K562 (cell line): ENCODE measurements at regions of chr1 and their contacts with region 1.

Region 1: DNA sequence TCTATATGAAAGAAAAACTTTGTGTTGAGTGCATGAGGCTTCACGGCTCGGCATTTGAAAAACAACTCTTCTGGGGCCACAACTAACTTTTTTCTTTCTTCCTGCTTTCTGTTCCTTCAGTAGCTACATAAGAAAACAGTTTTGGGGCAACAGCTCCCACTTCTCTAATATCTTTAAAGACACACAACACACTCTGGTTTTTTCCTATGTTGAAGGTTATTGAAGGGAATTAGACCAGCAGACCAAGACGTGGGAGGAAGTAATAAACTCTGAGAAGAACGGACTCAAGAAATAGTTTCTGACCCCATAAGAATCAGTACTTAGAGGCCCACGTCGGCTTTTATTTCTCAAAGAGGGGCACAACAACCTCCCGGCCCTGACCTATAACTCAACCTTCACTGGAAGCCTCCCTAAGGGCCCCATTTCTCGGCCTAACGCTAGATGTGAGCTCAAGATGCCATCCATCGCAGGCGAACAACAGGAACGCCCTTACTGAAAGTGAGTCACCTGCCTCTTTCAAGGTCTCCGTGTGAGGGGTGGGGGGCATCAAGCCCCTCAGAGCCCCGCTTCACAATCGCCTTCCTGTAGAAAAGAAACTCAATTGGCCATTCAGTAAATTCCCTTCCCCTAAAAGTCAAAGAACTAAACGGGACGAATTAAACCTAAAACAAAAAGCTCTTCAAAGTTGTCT is 844 bp downstream of the ZMYM6 start:
- DNase-seq: peak; percentile 60 to 71 (median 64)
- ATAC-seq: peak; percentile 73
- H3K4me3 ChIP-seq: peak overlapping the region; percentile 61
- H3K27ac ChIP-seq: peak overlapping the region; percentile 88
- H3K4me1 ChIP-seq: peaks cover 0 to 7% of the 10 kb centered on the region in 2 experiments; a peak in 3 of 5 replicates
- H3K27me3 ChIP-seq: no peaks in the 10 kb centered on the region
- CTCF ChIP-seq: no peak
- EP300 ChIP-seq: no peak
- POLR2A ChIP-seq: no peak
- RAD21 ChIP-seq: no peak

Region 2: GRCh38 chr1:35016406-35016805 is 14.5 kb before region 1 on chr1:
- CTCF ChIA-PET with region 1: no interaction called
- POLR2A ChIA-PET with region 1: interaction called, 12 read pairs
- in situ Hi-C with region 1: no loop called
- intact Hi-C with region 1: no loop called
- DNase-seq: no peak
- ATAC-seq: no peak
- H3K4me3 ChIP-seq: no peak overlapping the region
- H3K27ac ChIP-seq: no peak overlapping the region
- H3K4me1 ChIP-seq: no peaks in the 10 kb centered on the region
- H3K27me3 ChIP-seq: no peaks in the 10 kb centered on the region
- CTCF ChIP-seq: no peak
- EP300 ChIP-seq: no peak
- POLR2A ChIP-seq: no peak
- RAD21 ChIP-seq: no peak

Region 3: DNA sequence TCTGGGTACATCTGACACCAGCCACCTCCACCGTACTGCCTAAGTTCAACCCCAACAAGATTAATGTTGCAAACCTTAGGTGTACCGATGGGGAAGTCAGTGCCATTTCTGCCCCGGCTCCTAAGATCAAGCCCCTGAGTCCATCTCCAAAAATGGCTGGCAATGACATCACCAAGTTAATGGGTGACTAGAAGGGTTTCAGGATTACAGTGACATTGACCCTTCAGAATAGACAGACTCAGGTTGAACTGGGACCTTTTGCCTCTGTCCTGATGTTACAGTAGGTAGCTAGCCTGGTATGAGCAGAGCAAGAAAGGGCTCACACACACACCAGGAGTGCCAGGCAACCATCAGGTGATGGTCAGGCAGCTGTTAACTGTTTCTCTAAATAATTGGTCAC is 22.5 kb after region 1 on chr1:
- CTCF ChIA-PET with region 1: no interaction called
- POLR2A ChIA-PET with region 1: no interaction called
- in situ Hi-C with region 1: no loop called
- intact Hi-C with region 1: no loop called
- DNase-seq: no peak
- ATAC-seq: no peak
- H3K4me3 ChIP-seq: no peak overlapping the region
- H3K27ac ChIP-seq: no peak overlapping the region
- H3K4me1 ChIP-seq: no peaks in the 10 kb centered on the region
- H3K27me3 ChIP-seq: peaks cover 8 to 13% of the 10 kb centered on the region in 2 experiments; a peak in 3 of 5 replicates
- CTCF ChIP-seq: no peak
- EP300 ChIP-seq: no peak
- POLR2A ChIP-seq: no peak
- RAD21 ChIP-seq: no peak

Region 4: DNA sequence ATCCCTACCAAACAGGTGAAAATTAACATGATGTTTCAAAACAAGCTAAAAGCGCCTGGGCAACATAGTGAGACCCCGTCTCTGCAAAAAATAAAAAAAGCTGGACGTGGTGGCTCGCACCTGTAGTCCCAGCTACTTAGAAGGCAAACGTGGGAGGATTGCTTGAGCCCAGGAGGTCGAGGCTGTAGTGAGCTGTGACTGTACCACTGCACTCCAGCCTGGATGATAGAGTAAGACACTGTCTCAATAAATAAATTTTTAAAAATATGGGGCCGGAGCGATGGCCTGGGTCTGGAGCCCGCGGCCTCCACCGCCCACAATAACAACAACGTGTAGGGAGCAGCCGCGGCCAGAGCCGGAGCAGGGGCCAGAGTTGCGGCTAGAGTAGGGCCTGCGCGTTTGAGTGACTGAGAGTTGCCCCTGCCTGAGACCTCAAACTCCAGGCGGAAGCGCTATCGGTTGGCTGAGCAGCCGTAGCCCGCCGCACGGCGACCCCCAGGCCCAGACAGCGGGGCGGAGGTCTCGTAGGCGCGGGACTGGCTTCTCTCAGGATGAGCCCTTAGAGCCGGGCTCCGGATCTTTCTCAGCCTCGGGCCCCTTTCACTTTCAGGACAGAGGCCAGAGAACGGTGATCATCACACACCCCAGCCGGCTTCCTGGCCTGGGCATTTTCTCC is 89.7 kb after region 1 on chr1:
- CTCF ChIA-PET with region 1: no interaction called
- POLR2A ChIA-PET with region 1: no interaction called
- in situ Hi-C with region 1: no loop called
- intact Hi-C with region 1: no loop called
- DNase-seq: no peak
- ATAC-seq: peak; percentile 35; the same call in 1 of the 3 replicates
- H3K4me3 ChIP-seq: no peak overlapping the region
- H3K27ac ChIP-seq: no peak overlapping the region
- H3K4me1 ChIP-seq: peaks cover 0 to 16% of the 10 kb centered on the region in 2 experiments; a peak in 2 of 5 replicates
- H3K27me3 ChIP-seq: no peaks in the 10 kb centered on the region
- CTCF ChIP-seq: no peak
- EP300 ChIP-seq: no peak
- POLR2A ChIP-seq: no peak
- RAD21 ChIP-seq: no peak

Region 5: DNA sequence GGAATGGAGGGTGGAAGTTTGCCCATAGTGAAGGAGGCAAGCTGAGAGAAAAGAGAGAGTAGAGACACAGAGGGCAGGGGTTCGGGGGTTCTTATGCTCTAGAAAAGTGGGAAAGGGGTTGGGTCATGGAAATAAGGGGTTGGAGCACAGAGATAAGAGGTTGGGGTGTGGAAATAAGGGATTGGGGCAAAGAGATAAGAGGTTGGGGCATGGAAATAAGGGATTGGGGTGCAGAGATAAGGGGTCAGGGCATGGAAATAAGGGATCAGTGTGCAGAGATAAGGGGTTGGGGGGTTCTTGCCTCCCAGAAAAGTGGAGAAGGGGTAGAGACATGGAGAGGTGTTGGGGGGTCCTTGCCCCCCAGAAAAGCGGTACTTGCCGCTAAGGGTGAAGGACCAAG is 105.9 kb after region 1 on chr1:
- CTCF ChIA-PET with region 1: no interaction called
- POLR2A ChIA-PET with region 1: no interaction called
- in situ Hi-C with region 1: no loop called
- intact Hi-C with region 1: loop called (anchors 5 kb)
- DNase-seq: peak in 2 of 4 experiments; percentile 12 to 50
- ATAC-seq: peak; percentile 36; the same call in 2 of the 3 replicates
- H3K4me3 ChIP-seq: no peak overlapping the region
- H3K27ac ChIP-seq: no peak overlapping the region; the same call in 2 of the 3 replicates
- H3K4me1 ChIP-seq: peaks cover 6 to 14% of the 10 kb centered on the region in 2 experiments
- H3K27me3 ChIP-seq: no peaks in the 10 kb centered on the region
- CTCF ChIP-seq: no peak
- EP300 ChIP-seq: peak; percentile 77
- POLR2A ChIP-seq: no peak
- RAD21 ChIP-seq: no peak

Region 6: DNA sequence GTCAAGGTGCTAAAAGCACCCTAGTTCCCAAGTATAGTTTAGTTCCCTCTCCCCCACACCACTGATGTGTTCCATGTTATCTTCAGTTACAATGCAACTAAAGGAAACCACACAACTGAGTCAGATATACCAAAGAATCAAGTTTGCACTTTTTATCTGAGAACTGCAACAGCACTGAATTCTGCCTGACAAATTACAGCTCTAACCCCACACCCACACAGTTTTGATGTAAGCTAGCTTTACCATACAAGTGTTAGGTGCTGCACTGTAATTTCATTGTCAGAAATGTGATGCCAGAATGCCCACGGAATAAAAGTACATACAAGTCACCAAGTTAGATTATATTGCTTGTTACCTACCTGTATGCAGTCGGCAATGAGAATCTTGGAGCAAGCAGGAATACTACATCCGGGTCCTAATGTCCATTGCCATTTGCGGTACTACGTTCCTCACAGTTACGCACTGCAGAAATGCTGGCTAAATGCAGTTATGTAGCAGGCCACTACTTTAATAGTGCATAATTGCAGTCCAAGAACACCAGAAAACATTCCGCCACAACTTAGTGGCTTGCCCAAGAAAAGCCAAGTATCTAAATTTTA is 150.0 kb after region 1 on chr1:
- CTCF ChIA-PET with region 1: no interaction called
- POLR2A ChIA-PET with region 1: interaction called, 4 read pairs
- in situ Hi-C with region 1: no loop called
- intact Hi-C with region 1: loop called (anchors 10 kb)
- DNase-seq: peak in 2 of 4 experiments; percentile 4 to 54
- ATAC-seq: peak; percentile 22
- H3K4me3 ChIP-seq: no peak overlapping the region
- H3K27ac ChIP-seq: no peak overlapping the region
- H3K4me1 ChIP-seq: peaks cover 4 to 11% of the 10 kb centered on the region in 2 experiments; a peak in 2 of 5 replicates
- H3K27me3 ChIP-seq: no peaks in the 10 kb centered on the region
- CTCF ChIP-seq: no peak
- EP300 ChIP-seq: no peak; the same call in 1 of the 2 replicates
- POLR2A ChIP-seq: peak; percentile 73
- RAD21 ChIP-seq: no peak